ENCODE measurements at regions of chr6 and their contacts with region 1.

Region 1: GRCh38 chr6:148578245-148578732 is 168.5 kb upstream of the UST start:
- DNase-seq: peak; percentile 74
- ATAC-seq: peak; percentile 100
- H3K4me3 ChIP-seq: no peak overlapping the region
- H3K27ac ChIP-seq: no peak overlapping the region
- H3K4me1 ChIP-seq: peaks cover 0 to 7% of the 10 kb centered on the region in 2 experiments; a peak in 1 of 4 replicates
- H3K27me3 ChIP-seq: 0 out of 2 replicates have a peak, but pooled peaks cover 5% of the 10 kb centered on the region
- CTCF ChIP-seq: peak; percentile 92 to 99 (median 98)
- POLR2A ChIP-seq: no peak
- RAD21 ChIP-seq: peak; percentile 98

Region 2: DNA sequence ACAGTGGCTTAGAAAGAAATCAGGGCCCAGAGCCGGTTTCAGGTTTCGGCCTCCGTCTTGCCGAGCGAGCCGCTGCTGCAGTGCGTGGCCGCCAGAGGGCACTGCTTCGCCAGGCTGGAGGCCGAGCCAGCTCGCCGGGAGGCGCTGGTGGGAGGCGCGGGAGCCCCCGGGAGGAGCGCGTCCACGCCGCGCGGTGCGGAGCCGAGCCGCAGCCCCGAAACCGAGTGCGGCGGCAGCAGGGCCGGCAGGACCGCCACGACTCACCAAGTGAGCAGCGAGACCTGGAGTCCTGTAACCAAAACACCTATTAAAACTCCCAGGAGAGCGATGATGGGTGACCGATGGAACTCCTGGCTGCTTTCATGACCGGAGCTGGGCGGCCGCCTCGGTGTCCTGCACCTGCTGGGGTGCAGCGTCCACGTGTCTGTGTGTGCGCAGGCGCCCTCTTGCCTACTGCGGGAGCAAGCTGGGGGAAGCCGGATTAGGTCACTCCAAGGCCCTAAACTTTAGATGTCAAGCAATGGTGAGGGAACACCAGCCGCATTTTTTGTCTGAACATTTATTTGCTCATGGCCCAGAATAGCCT is 18.3 kb before region 1 on chr6:
- CTCF ChIA-PET with region 1: interaction called, 16 read pairs
- POLR2A ChIA-PET with region 1: no interaction called
- RAD21 ChIA-PET with region 1: interaction called in 1 of 2 experiments, 3 read pairs
- intact Hi-C with region 1: no loop called
- DNase-seq: peak; percentile 26
- ATAC-seq: peak; percentile 97
- H3K4me3 ChIP-seq: peak overlapping the region; percentile 23 to 54
- H3K27ac ChIP-seq: no peak overlapping the region
- H3K4me1 ChIP-seq: peaks cover 0 to 6% of the 10 kb centered on the region in 2 experiments; a peak in 2 of 4 replicates
- H3K27me3 ChIP-seq: no peaks in the 10 kb centered on the region
- CTCF ChIP-seq: peak; percentile 84 to 94 (median 94)
- POLR2A ChIP-seq: no peak
- RAD21 ChIP-seq: peak; percentile 88

Region 3: GRCh38 chr6:148947621-148948444 is 369.5 kb after region 1 on chr6:
- CTCF ChIA-PET with region 1: interaction called, 31 read pairs
- POLR2A ChIA-PET with region 1: no interaction called
- RAD21 ChIA-PET with region 1: interaction called in 1 of 2 experiments, 8 read pairs
- intact Hi-C with region 1: loop called (anchors 1 kb)
- DNase-seq: peak; percentile 60
- ATAC-seq: peak; percentile 98
- H3K4me3 ChIP-seq: no peak overlapping the region
- H3K27ac ChIP-seq: no peak overlapping the region
- H3K4me1 ChIP-seq: 0 out of 4 replicates have a peak, but pooled peaks cover 0 to 2% of the 10 kb centered on the region in 2 experiments
- H3K27me3 ChIP-seq: no peaks in the 10 kb centered on the region
- CTCF ChIP-seq: peak; percentile 80 to 87 (median 86)
- POLR2A ChIP-seq: no peak
- RAD21 ChIP-seq: peak; percentile 78

Region 4: GRCh38 chr6:148972481-148972880 is 394.2 kb after region 1 on chr6:
- CTCF ChIA-PET with region 1: interaction called, 21 read pairs
- POLR2A ChIA-PET with region 1: no interaction called
- RAD21 ChIA-PET with region 1: no interaction called
- intact Hi-C with region 1: no loop called
- DNase-seq: peak; percentile 46
- ATAC-seq: peak; percentile 100
- H3K4me3 ChIP-seq: no peak overlapping the region; a peak in 1 of 4 replicates
- H3K27ac ChIP-seq: no peak overlapping the region
- H3K4me1 ChIP-seq: peaks cover 6 to 9% of the 10 kb centered on the region in 2 experiments
- H3K27me3 ChIP-seq: no peaks in the 10 kb centered on the region
- CTCF ChIP-seq: no peak
- POLR2A ChIP-seq: no peak
- RAD21 ChIP-seq: no peak

Region 5: GRCh38 chr6:149431905-149432775 is 853.9 kb after region 1 on chr6:
- CTCF ChIA-PET with region 1: interaction called, 14 read pairs
- POLR2A ChIA-PET with region 1: interaction called, 3 read pairs
- RAD21 ChIA-PET with region 1: interaction called in 1 of 2 experiments, 3 read pairs
- intact Hi-C with region 1: loop called (anchors 5 kb)
- DNase-seq: peak; percentile 76
- ATAC-seq: peak; percentile 99
- H3K4me3 ChIP-seq: no peak overlapping the region
- H3K27ac ChIP-seq: no peak overlapping the region
- H3K4me1 ChIP-seq: peaks cover 0 to 7% of the 10 kb centered on the region in 2 experiments; a peak in 2 of 4 replicates
- H3K27me3 ChIP-seq: no peaks in the 10 kb centered on the region
- CTCF ChIP-seq: peak; percentile 85 to 95 (median 93)
- POLR2A ChIP-seq: no peak
- RAD21 ChIP-seq: peak; percentile 100

Region 6: GRCh38 chr6:149513915-149514314 is 935.6 kb after region 1 on chr6:
- CTCF ChIA-PET with region 1: no interaction called
- POLR2A ChIA-PET with region 1: no interaction called
- RAD21 ChIA-PET with region 1: no interaction called
- intact Hi-C with region 1: loop called (anchors 10 kb)
- DNase-seq: no peak
- ATAC-seq: no peak
- H3K4me3 ChIP-seq: no peak overlapping the region
- H3K27ac ChIP-seq: no peak overlapping the region
- H3K4me1 ChIP-seq: no peaks in the 10 kb centered on the region
- H3K27me3 ChIP-seq: no peaks in the 10 kb centered on the region
- CTCF ChIP-seq: no peak
- POLR2A ChIP-seq: no peak
- RAD21 ChIP-seq: no peak

Measured in HCT116 (cell line).